CD8-positive, alpha-beta T cell (primary cell): ENCODE measurements at regions of chr16 and their contacts with region 1.

Region 1: GRCh38 chr16:30957456-30958174 is at the start of gene SETD1A:
- DNase-seq: peak; percentile 91 to 99 (median 98)
- ATAC-seq: peak; percentile 86
- H3K4me3 ChIP-seq: peak within 1 kb of the TSS; percentile 88 to 97
- H3K4me3 Mint-ChIP-seq: peak within 1 kb of the TSS; percentile 95
- H3K27ac ChIP-seq: peak within 1 kb of the TSS; percentile 93 to 98
- H3K27ac Mint-ChIP-seq: peak within 1 kb of the TSS; percentile 98
- H3K4me1 ChIP-seq: peaks cover 27% of the 10 kb centered on the region
- H3K4me1 Mint-ChIP-seq: peaks cover 31% of the 10 kb centered on the region
- H3K27me3 ChIP-seq: no peaks in the 10 kb centered on the region
- H3K27me3 Mint-ChIP-seq: no peaks in the 10 kb centered on the region
- CTCF ChIP-seq: no peak
- total RNA-seq, gene SETD1A: 43.6 to 48.3 TPM

Region 2: DNA sequence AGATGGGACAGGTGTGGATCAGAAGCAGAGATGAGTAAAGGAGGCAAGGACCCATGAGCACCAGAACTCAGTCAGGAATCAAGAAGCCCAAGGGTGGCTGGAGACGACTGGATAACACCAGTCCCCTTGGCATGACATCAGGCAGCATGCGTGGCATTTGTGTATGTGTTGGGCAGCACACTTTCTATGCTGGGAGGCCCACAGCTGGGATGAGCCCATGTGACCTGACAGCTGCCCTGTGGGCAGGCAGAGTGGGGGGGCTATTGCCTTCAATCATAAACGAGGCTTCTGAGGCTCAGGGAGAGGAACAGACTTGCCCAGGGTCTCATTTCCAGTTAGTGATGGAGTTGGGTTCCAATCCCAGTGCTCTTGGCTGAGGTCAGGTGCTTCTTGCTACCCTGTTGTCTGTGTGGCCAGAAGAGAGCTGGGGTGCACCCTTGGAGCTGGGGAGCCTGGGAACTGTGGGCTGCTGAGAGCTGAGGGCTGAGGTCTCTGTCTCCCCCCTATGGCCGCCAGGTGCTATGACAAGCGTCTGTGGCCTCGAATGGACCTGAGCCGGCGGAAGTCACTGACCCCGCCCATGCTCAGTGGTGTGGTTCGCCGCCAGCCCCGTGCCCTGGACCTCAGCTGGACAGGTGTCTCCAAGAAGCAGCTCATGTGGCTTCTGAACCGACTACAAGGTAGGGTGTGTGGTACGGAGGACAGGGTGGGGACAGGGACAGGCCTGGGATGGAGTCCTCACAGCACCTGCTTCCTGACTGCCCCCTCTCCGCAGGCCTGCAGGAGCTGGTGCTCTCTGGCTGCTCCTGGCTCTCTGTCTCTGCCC is 15.8 kb before region 1 on chr16:
- CTCF ChIA-PET with region 1: interaction called, 44 read pairs
- POLR2A ChIA-PET with region 1: no interaction called
- intact Hi-C with region 1: no loop called
- DNase-seq: peak; percentile 34 to 84 (median 62)
- ATAC-seq: peak; percentile 97
- H3K4me3 ChIP-seq: peak overlapping the region in 1 of 2 experiments; percentile 26
- H3K4me3 Mint-ChIP-seq: no peak overlapping the region
- H3K27ac ChIP-seq: peak overlapping the region in 1 of 2 experiments; percentile 9
- H3K27ac Mint-ChIP-seq: no peak overlapping the region
- H3K4me1 ChIP-seq: peaks cover 10% of the 10 kb centered on the region
- H3K4me1 Mint-ChIP-seq: peaks cover 12% of the 10 kb centered on the region
- H3K27me3 ChIP-seq: no peaks in the 10 kb centered on the region
- H3K27me3 Mint-ChIP-seq: no peaks in the 10 kb centered on the region
- CTCF ChIP-seq: peak; percentile 80

Region 3: GRCh38 chr16:31032736-31033708 is 75.4 kb after region 1 on chr16 and contains the start of gene STX4:
- CTCF ChIA-PET with region 1: no interaction called
- POLR2A ChIA-PET with region 1: no interaction called
- intact Hi-C with region 1: loop called (anchors 1 kb)
- DNase-seq: peak; percentile 93 to 100 (median 97)
- ATAC-seq: peak; percentile 73
- H3K4me3 ChIP-seq: peak within 1 kb of the TSS; percentile 84 to 88
- H3K4me3 Mint-ChIP-seq: peak within 1 kb of the TSS; percentile 98
- H3K27ac ChIP-seq: peak within 1 kb of the TSS; percentile 98 to 99
- H3K27ac Mint-ChIP-seq: peak within 1 kb of the TSS; percentile 99
- H3K4me1 ChIP-seq: peaks cover 18% of the 10 kb centered on the region
- H3K4me1 Mint-ChIP-seq: peaks cover 28% of the 10 kb centered on the region
- H3K27me3 ChIP-seq: no peaks in the 10 kb centered on the region
- H3K27me3 Mint-ChIP-seq: no peaks in the 10 kb centered on the region
- CTCF ChIP-seq: no peak
- total RNA-seq, gene STX4: 63.8 to 69.9 TPM

Region 4: GRCh38 chr16:31117391-31118197 is 160.0 kb after region 1 on chr16 and contains the start of gene KAT8:
- CTCF ChIA-PET with region 1: no interaction called
- POLR2A ChIA-PET with region 1: no interaction called
- intact Hi-C with region 1: loop called (anchors 1 kb)
- DNase-seq: peak; percentile 92 to 99 (median 97)
- ATAC-seq: peak; percentile 92
- H3K4me3 ChIP-seq: peak within 1 kb of the TSS; percentile 53 to 93
- H3K4me3 Mint-ChIP-seq: peak within 1 kb of the TSS; percentile 74
- H3K27ac ChIP-seq: peak within 1 kb of the TSS; percentile 83 to 96
- H3K27ac Mint-ChIP-seq: peak within 1 kb of the TSS; percentile 95
- H3K4me1 ChIP-seq: peaks cover 11% of the 10 kb centered on the region
- H3K4me1 Mint-ChIP-seq: peaks cover 18% of the 10 kb centered on the region
- H3K27me3 ChIP-seq: no peaks in the 10 kb centered on the region
- H3K27me3 Mint-ChIP-seq: no peaks in the 10 kb centered on the region
- CTCF ChIP-seq: no peak
- total RNA-seq, gene KAT8: 105 to 107 TPM

Region 5: GRCh38 chr16:31868691-31869167 is 911.1 kb after region 1 on chr16:
- CTCF ChIA-PET with region 1: interaction called, 11 read pairs
- POLR2A ChIA-PET with region 1: no interaction called
- intact Hi-C with region 1: loop called (anchors 10 kb)
- DNase-seq: peak; percentile 60 to 88 (median 82)
- ATAC-seq: peak; percentile 20
- H3K4me3 ChIP-seq: peak overlapping the region; percentile 33 to 48
- H3K4me3 Mint-ChIP-seq: peak overlapping the region; percentile 66
- H3K27ac ChIP-seq: peak overlapping the region; percentile 18 to 79
- H3K27ac Mint-ChIP-seq: peak overlapping the region; percentile 88
- H3K4me1 ChIP-seq: peaks cover 31% of the 10 kb centered on the region
- H3K4me1 Mint-ChIP-seq: peaks cover 47% of the 10 kb centered on the region
- H3K27me3 ChIP-seq: no peaks in the 10 kb centered on the region
- H3K27me3 Mint-ChIP-seq: no peaks in the 10 kb centered on the region
- CTCF ChIP-seq: peak; percentile 96